Transverse colon (tissue), 4 donors: ENCODE measurements at regions of chr3 and their contacts with region 1.

Region 1: DNA sequence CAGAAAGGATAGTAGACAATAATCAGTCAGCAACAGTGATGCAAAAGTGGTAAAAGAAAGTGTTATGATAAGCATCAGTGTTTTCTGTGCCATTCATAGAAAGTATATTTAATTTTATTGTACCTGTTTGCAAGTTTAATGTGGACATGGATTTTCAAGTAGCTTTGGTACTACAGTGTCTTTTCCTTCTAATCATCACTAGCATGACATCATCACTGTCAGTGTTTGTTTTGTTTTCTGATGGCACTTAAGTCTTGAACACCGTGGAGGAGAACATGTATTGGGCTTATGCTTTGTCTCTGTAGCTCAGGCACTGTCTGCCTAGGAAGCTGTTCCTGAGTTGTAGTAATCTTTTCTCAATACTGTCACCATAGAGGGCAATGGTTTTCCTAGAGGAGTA is 41.9 kb downstream of the SETD5 start:
- DNase-seq: no peak
- H3K4me3 ChIP-seq: no peak overlapping the region
- H3K27ac ChIP-seq: no peak overlapping the region
- H3K4me1 ChIP-seq: no peaks in the 10 kb centered on the region
- H3K27me3 ChIP-seq: no peaks in the 10 kb centered on the region
- CTCF ChIP-seq: no peak
- EP300 ChIP-seq: no peak
- POLR2A ChIP-seq: no peak

Region 2: DNA sequence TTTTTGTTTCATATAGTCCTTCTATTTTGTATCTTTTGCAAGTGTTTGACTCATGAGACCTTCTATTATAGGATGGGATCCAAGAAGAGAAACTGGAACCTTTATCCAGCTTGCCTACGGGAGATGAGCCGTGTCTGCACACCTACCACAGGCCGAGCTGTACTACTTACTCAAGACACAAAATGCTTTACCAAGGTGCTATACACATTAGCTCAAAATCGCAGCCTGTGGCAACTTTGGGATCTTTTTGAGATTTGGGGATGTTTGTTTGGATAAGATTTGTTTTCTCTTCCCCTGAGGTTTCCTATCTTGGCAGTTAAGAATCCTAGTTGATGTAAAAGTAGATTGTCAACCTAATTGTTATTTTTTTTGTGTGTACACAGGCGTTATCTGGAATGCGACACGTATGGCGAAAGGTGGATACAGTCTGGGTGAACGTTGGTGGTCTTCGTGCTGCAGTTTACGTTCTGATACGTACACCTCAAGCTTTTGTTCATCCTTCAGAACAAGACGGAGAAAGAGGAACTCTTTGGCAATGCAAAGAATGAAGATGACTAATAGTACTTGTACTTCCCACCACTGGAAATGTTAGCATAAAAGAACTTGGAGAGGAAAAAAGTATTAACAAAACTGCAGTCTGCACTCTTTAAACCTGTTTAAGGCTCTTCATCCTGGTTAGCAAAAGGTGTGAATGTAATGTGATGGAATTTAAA is 55.0 kb before region 1 on chr3:
- in situ Hi-C with region 1: no loop called
- intact Hi-C with region 1: loop called (anchors 10 kb)
- DNase-seq: no peak
- H3K4me3 ChIP-seq: no peak overlapping the region
- H3K27ac ChIP-seq: no peak overlapping the region
- H3K4me1 ChIP-seq: no peaks in the 10 kb centered on the region
- H3K27me3 ChIP-seq: no peaks in the 10 kb centered on the region
- CTCF ChIP-seq: no peak
- EP300 ChIP-seq: no peak
- POLR2A ChIP-seq: no peak